Mammary epithelial cell (primary cell): ENCODE measurements at regions of chr7 and their contacts with region 1.

Region 1: DNA sequence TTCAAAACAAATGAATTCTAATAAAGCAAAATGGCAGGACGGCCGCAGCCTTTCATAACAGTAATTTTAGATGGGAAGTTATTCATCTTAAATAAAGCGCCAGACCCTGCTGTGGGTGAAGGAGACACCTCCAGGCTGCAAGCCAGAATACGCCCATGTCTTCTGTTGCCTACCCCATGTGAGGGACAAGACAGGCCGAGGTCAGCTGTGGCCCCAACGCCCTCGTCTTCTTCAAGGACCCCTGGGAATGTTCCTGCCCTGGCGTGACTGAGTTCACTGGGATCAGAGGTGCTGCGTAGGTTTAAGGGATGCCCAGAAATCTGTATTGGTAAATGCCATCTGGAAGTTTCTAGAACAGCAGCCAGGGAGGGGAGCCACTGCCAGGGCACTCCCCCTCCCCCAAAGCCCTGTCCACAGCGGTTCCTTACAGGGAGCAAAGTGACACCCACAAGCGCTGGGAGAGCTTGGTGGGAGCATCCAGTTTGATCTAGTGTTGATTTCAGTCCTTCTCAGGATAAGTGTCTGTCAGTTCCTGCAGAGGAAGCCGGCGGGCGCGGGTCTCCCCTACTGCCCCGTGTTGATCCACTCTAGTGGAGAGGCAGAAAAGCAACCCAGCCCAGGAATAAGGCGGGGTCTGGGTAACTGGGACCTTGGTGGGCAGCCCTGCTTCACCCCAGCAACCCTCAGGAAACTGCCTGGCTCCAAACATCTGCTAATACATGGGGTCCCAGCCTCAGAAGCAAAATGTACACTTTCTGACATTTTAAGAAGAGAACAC is 20.6 kb downstream of the PAPOLB start:
- DNase-seq: no peak
- H3K4me3 ChIP-seq: no peak overlapping the region
- H3K27ac ChIP-seq: no peak overlapping the region
- H3K4me1 ChIP-seq: no peaks in the 10 kb centered on the region
- H3K27me3 ChIP-seq: no peaks in the 10 kb centered on the region
- CTCF ChIP-seq: no peak

Region 2: GRCh38 chr7:6350433-6351058 is 1509.3 kb after region 1 on chr7:
- CTCF ChIA-PET with region 1: interaction called, 13 read pairs
- dilution Hi-C with region 1: no loop called
- in situ Hi-C with region 1: no loop called
- intact Hi-C with region 1: no loop called
- DNase-seq: peak; percentile 61
- H3K4me3 ChIP-seq: no peak overlapping the region
- H3K27ac ChIP-seq: no peak overlapping the region
- H3K4me1 ChIP-seq: peaks cover 2% of the 10 kb centered on the region
- H3K27me3 ChIP-seq: no peaks in the 10 kb centered on the region
- CTCF ChIP-seq: no peak